Colonic mucosa (tissue), 4 donors: ENCODE measurements at regions of chr11 and their contacts with region 1.

Region 1: DNA sequence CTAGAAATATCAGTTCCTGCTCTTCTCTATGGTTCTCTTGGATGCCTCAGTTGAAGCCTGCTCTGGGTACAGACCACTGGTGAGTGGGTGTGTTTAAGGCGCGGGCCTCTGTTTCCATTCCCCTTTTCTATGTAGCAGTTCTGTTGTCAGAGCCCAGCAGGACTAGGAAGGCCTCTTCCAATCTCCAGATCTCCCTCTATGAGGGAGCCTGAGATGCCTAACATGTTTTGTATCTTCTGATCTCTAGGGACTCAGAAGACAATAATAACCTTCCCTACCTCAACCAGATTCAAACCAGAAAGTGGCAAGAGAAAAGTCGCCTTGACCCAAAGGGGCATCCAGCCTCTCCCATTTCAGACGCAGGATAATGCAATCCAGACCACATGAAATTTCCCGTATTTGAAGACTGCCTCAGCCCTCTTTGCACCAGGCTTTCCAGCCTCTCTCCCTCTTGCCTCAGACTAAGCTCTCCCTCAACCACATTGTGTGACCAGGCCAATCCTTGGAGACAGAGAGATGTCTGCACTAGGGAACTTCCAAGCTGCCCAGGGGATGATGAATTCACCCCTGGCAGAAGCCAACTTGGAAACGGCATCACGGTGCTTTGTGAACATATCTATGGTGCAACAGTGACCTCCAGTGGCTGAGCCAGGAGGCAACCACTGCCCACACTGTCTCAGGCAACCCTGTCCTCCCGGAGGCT is 150.1 kb upstream of the UBASH3B start:
- DNase-seq: peak; percentile 66
- H3K4me3 ChIP-seq: no peak overlapping the region
- H3K27ac ChIP-seq: no peak overlapping the region
- H3K4me1 ChIP-seq: no peaks in the 10 kb centered on the region
- H3K27me3 ChIP-seq: no peaks in the 10 kb centered on the region
- CTCF ChIP-seq: peak; percentile 75

Region 2: GRCh38 chr11:122215244-122215992 is 290.0 kb before region 1 on chr11:
- intact Hi-C with region 1: loop called (anchors 2 kb)
- DNase-seq: peak; percentile 57
- H3K4me3 ChIP-seq: no peak overlapping the region
- H3K27ac ChIP-seq: no peak overlapping the region
- H3K4me1 ChIP-seq: no peaks in the 10 kb centered on the region
- H3K27me3 ChIP-seq: no peaks in the 10 kb centered on the region
- CTCF ChIP-seq: peak; percentile 80

Region 3: GRCh38 chr11:122394313-122394712 is 111.1 kb before region 1 on chr11:
- intact Hi-C with region 1: no loop called
- DNase-seq: no peak
- H3K4me3 ChIP-seq: no peak overlapping the region
- H3K27ac ChIP-seq: no peak overlapping the region
- H3K4me1 ChIP-seq: no peaks in the 10 kb centered on the region
- H3K27me3 ChIP-seq: no peaks in the 10 kb centered on the region
- CTCF ChIP-seq: no peak